Activated CD4-positive, alpha-beta T cell treated with anti-CD3 and anti-CD28 coated beads, Interleukin-2, amount 10 ng/mL, durations not matched to agents 24 days and 14 days (primary cell): ENCODE measurements at regions of chr11 and their contacts with region 1.

Region 1: DNA sequence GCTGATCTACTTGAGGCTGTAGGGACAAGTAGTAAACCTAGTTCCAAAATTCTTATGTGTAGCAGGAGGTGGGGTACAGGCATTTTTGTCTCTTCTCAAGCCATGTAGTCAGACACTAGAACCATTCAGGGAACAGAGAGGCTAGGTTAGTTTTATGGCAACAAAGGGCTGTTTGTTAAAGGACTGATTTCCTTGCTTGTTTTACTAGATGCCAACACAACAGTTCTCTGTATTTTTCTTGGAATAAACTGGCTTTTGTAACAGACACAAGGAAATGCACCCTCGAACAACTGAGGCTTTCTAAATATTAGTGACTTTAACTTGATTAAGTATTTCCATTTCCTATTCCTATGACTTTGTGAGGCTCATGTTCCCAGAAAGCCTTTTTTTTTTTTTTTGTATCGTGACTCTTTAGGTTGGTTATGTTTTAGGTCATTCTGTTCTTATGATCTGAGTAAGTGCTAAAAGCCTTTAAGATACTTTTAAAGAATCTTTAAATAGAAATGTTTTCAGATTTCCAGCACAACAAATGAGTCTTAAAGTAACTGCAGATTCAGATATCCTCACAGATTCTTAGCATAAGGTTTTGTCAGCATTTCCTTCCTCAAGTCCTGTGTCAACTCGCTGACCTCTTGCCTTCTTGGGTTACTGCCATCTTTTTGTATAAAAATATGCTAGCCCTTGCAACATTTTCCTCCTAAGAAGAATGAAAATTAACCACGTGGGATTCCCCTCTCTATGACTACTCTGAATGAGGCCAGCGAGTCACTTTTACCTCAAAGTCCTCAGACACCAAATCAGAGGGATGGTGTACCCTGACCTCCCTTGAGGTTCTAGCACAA is 92.5 kb downstream of the CCDC83 start:
- DNase-seq: peak; percentile 66
- H3K4me3 Mint-ChIP-seq: peak overlapping the region; percentile 62
- H3K27ac Mint-ChIP-seq: peak overlapping the region; percentile 94
- H3K4me1 Mint-ChIP-seq: peaks cover 39% of the 10 kb centered on the region
- H3K27me3 Mint-ChIP-seq: no peaks in the 10 kb centered on the region

Region 2: DNA sequence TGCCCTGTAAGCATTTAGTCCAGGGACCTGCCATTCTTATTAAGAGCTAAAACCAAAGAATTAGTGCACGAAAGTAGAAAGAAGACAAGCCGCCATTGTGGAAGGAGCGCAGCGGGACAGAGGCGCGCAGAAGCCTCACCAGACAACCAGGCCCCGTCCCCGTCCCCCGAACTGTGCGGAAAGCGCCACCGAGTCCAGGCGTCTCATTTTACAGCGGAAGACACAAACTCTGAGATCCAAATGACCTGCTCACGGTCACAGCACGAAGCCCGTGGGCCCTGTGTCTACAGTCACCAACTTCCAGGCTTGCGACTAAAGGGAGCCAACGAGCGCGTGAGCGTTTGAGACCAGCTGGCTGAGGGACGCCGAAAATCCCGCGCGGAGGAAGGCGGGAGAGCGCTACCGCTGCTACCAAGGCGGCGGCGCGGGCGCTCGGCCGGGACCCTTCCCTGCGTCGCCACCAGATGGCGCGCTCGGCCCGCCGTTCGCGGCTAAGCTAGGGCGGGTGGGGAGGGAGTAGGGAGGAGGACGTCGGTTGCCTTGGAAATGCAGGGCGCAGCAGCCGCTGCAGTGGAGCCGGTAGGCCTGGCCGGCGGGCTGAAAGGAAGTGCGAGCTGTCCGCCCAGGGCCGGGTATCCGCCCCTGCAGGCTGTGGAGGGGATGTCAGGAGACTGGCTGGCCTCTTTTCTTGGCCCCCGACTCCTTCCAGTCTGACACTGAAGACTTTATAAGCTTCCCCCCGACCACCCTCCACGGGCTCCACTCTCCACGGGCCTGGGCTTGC is 92.9 kb before region 1 on chr11:
- intact Hi-C with region 1: loop called (anchors 2 kb)
- DNase-seq: peak; percentile 98
- H3K4me3 Mint-ChIP-seq: peak overlapping the region; percentile 94
- H3K27ac Mint-ChIP-seq: peak overlapping the region; percentile 96
- H3K4me1 Mint-ChIP-seq: peaks cover 11% of the 10 kb centered on the region
- H3K27me3 Mint-ChIP-seq: no peaks in the 10 kb centered on the region

Region 3: DNA sequence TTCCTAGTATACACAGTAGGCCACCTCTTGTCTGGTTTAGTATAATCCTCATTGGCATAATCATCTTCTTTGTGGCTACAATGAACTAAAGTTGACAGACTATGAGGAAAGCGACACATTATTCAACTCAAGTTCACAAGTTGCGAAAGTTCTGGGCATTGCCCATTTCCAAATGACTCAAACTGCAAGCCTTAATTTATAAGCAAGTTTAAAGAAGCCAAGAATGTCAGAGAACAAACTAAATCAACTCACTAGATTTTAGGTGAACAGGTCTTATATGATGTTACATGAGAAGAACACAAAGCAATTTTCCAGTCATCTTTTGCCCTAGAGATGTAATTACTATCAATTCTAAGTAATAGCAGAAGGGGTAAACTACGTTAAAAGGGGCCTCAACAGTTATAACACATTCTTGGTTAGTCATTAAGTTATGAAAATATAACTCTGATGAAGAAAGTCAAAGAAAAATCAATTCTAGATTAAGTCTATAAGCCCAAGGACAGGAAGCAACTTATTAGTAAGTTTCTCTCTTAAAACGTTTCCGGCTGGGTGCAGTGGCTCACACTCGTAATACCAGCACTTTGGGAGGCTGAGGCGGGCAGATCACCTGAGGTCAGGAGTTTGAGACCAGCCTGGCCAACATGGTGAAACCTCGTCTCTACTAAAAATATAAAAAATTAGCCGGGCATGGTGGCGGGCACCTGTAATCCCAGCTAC is 99.8 kb after region 1 on chr11:
- intact Hi-C with region 1: loop called (anchors 1 kb)
- DNase-seq: peak; percentile 64
- H3K4me3 Mint-ChIP-seq: peak overlapping the region; percentile 57
- H3K27ac Mint-ChIP-seq: peak overlapping the region; percentile 96
- H3K4me1 Mint-ChIP-seq: peaks cover 72% of the 10 kb centered on the region
- H3K27me3 Mint-ChIP-seq: no peaks in the 10 kb centered on the region

Region 4: DNA sequence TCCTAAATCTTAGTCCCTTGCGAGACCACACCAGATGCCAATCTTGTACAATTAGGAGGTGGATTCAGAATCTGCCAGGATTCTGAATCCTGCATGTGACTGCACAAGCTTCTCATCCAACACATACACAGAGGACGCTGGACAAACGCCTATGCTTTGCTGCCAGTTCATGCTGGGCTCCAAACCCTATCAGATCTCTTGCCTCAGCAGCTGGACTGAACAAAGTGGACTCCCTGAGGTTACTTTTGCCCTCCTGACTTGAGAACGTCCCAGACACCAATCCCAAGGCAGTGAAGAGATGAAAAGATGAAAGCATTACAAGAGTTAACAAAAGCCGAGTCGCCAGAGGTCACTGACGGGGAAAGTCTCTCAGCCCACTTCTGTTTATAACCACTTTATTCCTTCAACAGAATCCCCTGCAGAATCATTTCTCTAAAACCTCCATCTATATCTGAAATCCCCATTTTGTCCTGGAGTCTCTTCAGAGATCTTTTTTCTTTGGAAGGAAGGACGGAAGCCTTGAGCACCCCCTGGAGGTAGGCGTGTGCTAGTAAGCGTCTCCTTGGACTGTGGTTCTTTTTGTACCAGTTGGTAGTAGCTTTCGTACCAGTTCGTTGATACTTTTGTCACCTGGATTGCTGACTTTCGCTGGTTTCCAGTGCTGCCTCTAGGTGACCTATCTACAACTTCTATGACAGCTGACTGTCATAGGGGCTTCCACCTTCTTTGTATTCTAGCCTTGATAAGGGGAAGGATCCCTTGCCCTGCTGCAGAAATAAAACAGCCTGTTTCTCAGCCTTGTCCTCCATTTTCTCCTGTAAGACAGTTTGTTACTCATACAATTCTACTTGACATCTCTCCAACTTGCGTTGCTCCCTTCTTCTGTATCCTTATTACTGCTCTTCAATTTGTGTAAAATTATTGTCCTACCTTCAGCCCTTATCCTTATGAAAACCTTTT is 270.8 kb after region 1 on chr11:
- intact Hi-C with region 1: loop called (anchors 1 kb)
- DNase-seq: peak; percentile 89
- H3K4me3 Mint-ChIP-seq: peak overlapping the region; percentile 70
- H3K27ac Mint-ChIP-seq: peak overlapping the region; percentile 84
- H3K4me1 Mint-ChIP-seq: peaks cover 59% of the 10 kb centered on the region
- H3K27me3 Mint-ChIP-seq: no peaks in the 10 kb centered on the region

Region 5: DNA sequence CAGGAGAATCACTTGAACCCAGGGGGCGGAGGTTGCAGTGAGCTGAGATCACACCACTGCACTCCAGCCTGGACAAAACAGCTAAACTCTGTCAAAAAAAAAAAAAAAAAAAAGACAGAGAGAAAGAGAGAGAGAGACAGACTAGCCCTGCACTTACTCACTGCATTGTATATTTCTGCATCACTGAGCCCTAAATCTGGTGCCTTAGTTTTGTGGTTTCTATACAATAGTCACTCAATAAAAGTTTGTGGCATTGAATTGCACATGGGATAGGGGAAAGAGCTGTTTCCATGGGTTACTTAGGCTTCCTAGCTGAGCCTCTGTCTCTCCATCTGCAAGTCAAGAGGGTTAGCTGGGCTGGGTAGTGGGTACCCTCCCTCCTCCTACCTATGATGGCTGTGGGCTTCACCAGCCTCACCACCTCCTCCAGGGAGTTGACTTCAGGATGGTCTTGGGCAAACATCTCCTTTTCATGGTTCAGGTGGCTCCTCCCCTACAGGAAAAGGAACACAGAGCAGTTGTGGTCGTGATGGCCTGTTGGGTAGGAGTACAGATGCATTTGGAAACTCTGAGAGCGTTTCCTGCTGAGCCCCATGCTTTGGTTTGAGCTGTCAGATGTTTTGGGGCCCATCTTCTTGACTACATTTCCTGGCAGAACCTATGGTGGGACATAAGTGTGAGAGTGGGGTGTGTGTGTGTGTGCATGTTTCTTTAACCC is 500.3 kb after region 1 on chr11:
- intact Hi-C with region 1: loop called (anchors 5 kb)
- DNase-seq: peak; percentile 79
- H3K4me3 Mint-ChIP-seq: peak overlapping the region; percentile 48
- H3K27ac Mint-ChIP-seq: no peak overlapping the region
- H3K4me1 Mint-ChIP-seq: peaks cover 37% of the 10 kb centered on the region
- H3K27me3 Mint-ChIP-seq: no peaks in the 10 kb centered on the region

Region 6: GRCh38 chr11:86740709-86741483 is 793.2 kb after region 1 on chr11:
- intact Hi-C with region 1: loop called (anchors 5 kb)
- DNase-seq: peak; percentile 55
- H3K4me3 Mint-ChIP-seq: no peak overlapping the region
- H3K27ac Mint-ChIP-seq: peak overlapping the region; percentile 57
- H3K4me1 Mint-ChIP-seq: peaks cover 27% of the 10 kb centered on the region
- H3K27me3 Mint-ChIP-seq: no peaks in the 10 kb centered on the region